Esophagus muscularis mucosa (tissue), 4 donors: ENCODE measurements at regions of chr20 and their contacts with region 1.

Region 1: DNA sequence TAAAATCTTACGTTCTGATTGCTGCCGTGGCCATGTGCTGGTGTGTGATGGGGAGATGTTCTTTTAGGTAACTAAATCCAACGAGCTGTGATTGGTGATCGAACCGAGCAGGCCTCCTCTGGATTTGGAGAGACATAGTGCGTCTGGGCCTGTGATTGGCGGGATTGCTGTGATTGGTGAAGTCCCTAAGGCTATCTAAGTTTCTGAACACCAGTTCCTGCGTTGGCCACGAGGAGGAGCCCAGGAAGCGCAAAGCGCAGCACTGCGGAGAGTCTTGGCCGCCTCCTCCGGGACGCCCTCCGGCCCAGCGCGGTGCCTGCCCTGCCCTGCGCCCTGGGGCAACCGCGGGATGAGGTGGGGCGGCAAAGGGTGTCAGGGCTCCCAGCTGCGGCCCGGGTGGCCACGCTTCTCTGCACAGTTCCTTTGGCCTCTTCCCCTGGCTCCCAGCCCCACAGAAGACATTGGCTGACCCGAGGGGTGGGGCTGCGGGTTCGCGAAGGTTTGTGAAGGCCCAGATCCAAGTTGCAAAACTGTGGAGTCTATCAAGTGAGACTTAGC is 33.0 kb downstream of the HNF4A start:
- DNase-seq: no peak
- H3K4me3 ChIP-seq: peak overlapping the region in 1 of 4 donors; percentile 7
- H3K27ac ChIP-seq: no peak overlapping the region
- H3K4me1 ChIP-seq: peaks cover 0 to 9% (median 8%) of the 10 kb centered on the region in 4 donors
- H3K27me3 ChIP-seq: peaks cover 0 to 55% (median 0%) of the 10 kb centered on the region in 4 donors
- CTCF ChIP-seq: peak; percentile 49 to 84 (median 64)
- EP300 ChIP-seq: no peak
- POLR2A ChIP-seq: no peak

Region 2: DNA sequence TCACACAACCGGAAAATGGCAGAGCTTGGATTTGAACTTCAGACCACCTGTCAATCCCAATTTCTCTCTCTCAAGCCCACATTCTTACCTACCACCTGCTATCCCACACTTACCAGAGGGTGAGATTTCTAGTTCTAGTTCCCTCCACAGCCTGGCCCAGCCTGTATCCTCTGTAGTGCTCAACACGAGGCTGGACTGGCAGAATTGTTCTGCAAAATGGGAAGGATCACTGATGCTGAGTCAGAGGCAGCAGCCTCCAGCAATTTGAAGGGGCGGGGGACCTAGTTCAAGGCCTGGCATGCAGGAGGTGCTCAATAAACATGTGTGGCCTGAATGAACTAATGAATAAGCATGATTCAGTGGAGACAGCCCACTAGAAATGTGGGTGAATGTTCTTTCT is 33.5 kb after region 1 on chr20:
- intact Hi-C with region 1: no loop called
- DNase-seq: no peak
- H3K4me3 ChIP-seq: no peak overlapping the region
- H3K27ac ChIP-seq: no peak overlapping the region
- H3K4me1 ChIP-seq: no peaks in the 10 kb centered on the region
- H3K27me3 ChIP-seq: peaks cover 0 to 21% (median 0%) of the 10 kb centered on the region in 4 donors
- CTCF ChIP-seq: no peak
- EP300 ChIP-seq: no peak
- POLR2A ChIP-seq: no peak

Region 3: DNA sequence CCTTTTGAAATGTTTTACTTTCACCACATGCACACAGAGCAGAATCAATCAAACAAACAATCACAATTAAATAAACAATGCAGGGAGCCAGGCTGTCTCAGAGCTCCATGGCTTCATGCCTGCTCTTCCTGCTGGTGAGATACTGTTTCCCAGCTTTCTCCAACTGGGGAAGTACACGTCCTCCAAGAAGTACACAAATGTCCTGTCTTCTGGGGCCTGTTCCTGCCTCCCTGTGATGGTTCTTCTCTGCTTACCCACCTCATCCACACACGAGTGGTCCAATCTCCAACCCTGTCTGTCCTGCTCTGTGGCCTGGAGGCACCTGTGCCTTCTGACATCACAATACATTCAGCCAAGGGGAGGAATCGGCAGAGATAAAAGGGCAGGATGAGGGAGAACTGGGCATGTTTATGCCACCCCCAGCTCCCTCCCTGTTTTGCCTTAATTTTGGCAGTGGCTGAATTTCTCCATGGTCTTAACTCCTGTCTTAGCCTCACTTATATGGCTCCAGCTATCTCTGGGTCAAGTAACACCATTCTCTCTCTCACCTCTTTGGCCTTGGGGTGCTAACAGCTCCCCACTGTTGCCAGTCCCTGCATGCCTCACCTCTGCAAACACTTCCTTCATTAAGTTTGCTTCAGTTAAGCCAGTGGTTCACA is 61.9 kb after region 1 on chr20:
- intact Hi-C with region 1: no loop called
- DNase-seq: no peak
- H3K4me3 ChIP-seq: no peak overlapping the region
- H3K27ac ChIP-seq: no peak overlapping the region
- H3K4me1 ChIP-seq: peaks cover 0 to 6% (median 0%) of the 10 kb centered on the region in 4 donors
- H3K27me3 ChIP-seq: no peaks in the 10 kb centered on the region
- CTCF ChIP-seq: no peak
- EP300 ChIP-seq: no peak
- POLR2A ChIP-seq: no peak

Region 4: GRCh38 chr20:44516491-44516890 is 127.9 kb after region 1 on chr20:
- intact Hi-C with region 1: loop called (anchors 10 kb)
- DNase-seq: no peak
- H3K4me3 ChIP-seq: no peak overlapping the region
- H3K27ac ChIP-seq: peak overlapping the region in 3 of 4 donors; percentile 7 to 98 (median 13)
- H3K4me1 ChIP-seq: peaks cover 59 to 97% (median 92%) of the 10 kb centered on the region in 4 donors
- H3K27me3 ChIP-seq: no peaks in the 10 kb centered on the region
- CTCF ChIP-seq: no peak
- EP300 ChIP-seq: no peak
- POLR2A ChIP-seq: no peak

Region 5: GRCh38 chr20:44683263-44684046 is 294.9 kb after region 1 on chr20:
- intact Hi-C with region 1: loop called (anchors 5 kb)
- DNase-seq: no peak
- H3K4me3 ChIP-seq: no peak overlapping the region
- H3K27ac ChIP-seq: no peak overlapping the region
- H3K4me1 ChIP-seq: peaks cover 10 to 20% (median 19%) of the 10 kb centered on the region in 4 donors
- H3K27me3 ChIP-seq: no peaks in the 10 kb centered on the region
- CTCF ChIP-seq: peak; percentile 35 to 54 (median 39)
- EP300 ChIP-seq: no peak
- POLR2A ChIP-seq: no peak

Region 6: GRCh38 chr20:44733341-44734069 is 345.0 kb after region 1 on chr20:
- intact Hi-C with region 1: loop called (anchors 10 kb)
- DNase-seq: no peak
- H3K4me3 ChIP-seq: no peak overlapping the region
- H3K27ac ChIP-seq: peak overlapping the region in 2 of 4 donors; percentile 41 to 78
- H3K4me1 ChIP-seq: peaks cover 37 to 76% (median 59%) of the 10 kb centered on the region in 4 donors
- H3K27me3 ChIP-seq: no peaks in the 10 kb centered on the region
- CTCF ChIP-seq: peak; percentile 95 to 99 (median 97)
- EP300 ChIP-seq: no peak
- POLR2A ChIP-seq: no peak